ENCODE measurements at regions of chr22 and their contacts with region 1.

Region 1: GRCh38 chr22:40645579-40646197 is 9.2 kb upstream of the MRTFA start:
- DNase-seq: no peak
- ATAC-seq: no peak
- H3K4me3 Mint-ChIP-seq: no peak overlapping the region
- H3K27ac Mint-ChIP-seq: no peak overlapping the region
- H3K4me1 Mint-ChIP-seq: peaks cover 14% of the 10 kb centered on the region
- H3K27me3 Mint-ChIP-seq: no peaks in the 10 kb centered on the region
- CTCF ChIP-seq: no peak

Region 2: DNA sequence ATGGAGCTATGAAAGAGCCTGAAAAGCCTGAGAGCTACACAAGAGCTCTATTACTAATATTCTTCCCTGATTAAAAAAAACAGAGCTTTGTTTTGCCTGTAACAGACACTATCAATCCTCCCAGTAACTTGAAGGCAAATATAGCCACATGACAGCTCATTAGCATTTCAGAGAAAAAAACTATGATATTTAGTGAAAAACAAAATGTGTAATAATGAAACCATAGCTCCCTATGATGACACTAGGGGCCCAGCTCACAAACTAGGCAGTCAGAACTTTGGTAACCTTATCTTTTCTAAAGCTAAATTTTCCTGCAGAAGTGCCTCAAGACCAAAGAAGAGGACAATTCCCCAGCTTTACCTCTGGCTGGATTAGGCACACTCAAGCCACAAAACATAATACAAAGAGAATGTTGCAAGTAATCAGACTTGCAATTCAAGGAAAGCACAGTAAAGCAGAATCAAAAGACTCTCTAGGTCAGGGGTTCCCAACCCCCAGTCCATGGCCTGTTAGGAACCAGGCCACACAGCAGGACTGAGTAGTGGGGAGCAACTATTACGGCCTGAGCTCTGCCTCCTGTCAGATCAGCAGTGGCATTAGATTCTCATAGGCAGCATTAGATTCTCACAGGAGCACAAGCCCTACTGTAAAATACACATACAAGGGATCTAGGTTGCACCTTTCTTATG is 62.5 kb before region 1 on chr22:
- CTCF ChIA-PET with region 1: interaction called, 10 read pairs
- POLR2A ChIA-PET with region 1: no interaction called
- intact Hi-C with region 1: no loop called
- DNase-seq: no peak
- ATAC-seq: peak; percentile 54
- H3K4me3 Mint-ChIP-seq: no peak overlapping the region
- H3K27ac Mint-ChIP-seq: peak overlapping the region; percentile 25
- H3K4me1 Mint-ChIP-seq: peaks cover 36% of the 10 kb centered on the region
- H3K27me3 Mint-ChIP-seq: no peaks in the 10 kb centered on the region
- CTCF ChIP-seq: no peak

Region 3: DNA sequence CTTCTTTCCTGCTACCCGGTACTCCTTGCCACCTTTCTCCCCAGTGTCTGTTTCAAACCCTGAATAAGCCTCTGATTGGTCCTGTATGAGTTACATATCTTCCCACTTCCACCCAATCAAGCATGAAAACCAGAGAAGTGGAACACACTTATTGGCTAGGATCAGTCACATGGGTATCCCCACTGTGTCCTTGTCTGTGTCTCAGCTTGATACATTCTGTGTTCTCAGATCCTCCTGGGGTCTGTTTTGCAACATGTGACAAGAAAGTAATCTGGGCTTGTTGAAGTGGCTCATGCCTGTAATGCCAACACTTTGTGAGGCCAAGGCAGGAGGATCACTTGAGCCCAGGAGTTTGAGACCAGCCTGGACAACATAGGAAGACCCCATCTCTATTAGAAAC is 57.5 kb after region 1 on chr22:
- CTCF ChIA-PET with region 1: no interaction called
- POLR2A ChIA-PET with region 1: no interaction called
- intact Hi-C with region 1: no loop called
- DNase-seq: no peak
- ATAC-seq: no peak
- H3K4me3 Mint-ChIP-seq: no peak overlapping the region
- H3K27ac Mint-ChIP-seq: no peak overlapping the region
- H3K4me1 Mint-ChIP-seq: no peaks in the 10 kb centered on the region
- H3K27me3 Mint-ChIP-seq: peaks cover 3% of the 10 kb centered on the region
- CTCF ChIP-seq: no peak

Region 4: GRCh38 chr22:40898850-40899357 is 253.2 kb after region 1 on chr22:
- CTCF ChIA-PET with region 1: interaction called, 9 read pairs
- POLR2A ChIA-PET with region 1: no interaction called
- intact Hi-C with region 1: loop called (anchors 1 kb)
- DNase-seq: no peak
- ATAC-seq: peak; percentile 71
- H3K4me3 Mint-ChIP-seq: no peak overlapping the region
- H3K27ac Mint-ChIP-seq: peak overlapping the region; percentile 21
- H3K4me1 Mint-ChIP-seq: peaks cover 3% of the 10 kb centered on the region
- H3K27me3 Mint-ChIP-seq: no peaks in the 10 kb centered on the region
- CTCF ChIP-seq: no peak

Measured in activated B cell treated with CpG ODN at 0.5 μM for 24 hours (primary cell).